HEK293T (cell line): ENCODE measurements at regions of chr5 and their contacts with region 1.

Region 1: GRCh38 chr5:176388444-176389134 is at the starts of genes HIGD2A and NOP16:
- DNase-seq: peak; percentile 98

Region 2: DNA sequence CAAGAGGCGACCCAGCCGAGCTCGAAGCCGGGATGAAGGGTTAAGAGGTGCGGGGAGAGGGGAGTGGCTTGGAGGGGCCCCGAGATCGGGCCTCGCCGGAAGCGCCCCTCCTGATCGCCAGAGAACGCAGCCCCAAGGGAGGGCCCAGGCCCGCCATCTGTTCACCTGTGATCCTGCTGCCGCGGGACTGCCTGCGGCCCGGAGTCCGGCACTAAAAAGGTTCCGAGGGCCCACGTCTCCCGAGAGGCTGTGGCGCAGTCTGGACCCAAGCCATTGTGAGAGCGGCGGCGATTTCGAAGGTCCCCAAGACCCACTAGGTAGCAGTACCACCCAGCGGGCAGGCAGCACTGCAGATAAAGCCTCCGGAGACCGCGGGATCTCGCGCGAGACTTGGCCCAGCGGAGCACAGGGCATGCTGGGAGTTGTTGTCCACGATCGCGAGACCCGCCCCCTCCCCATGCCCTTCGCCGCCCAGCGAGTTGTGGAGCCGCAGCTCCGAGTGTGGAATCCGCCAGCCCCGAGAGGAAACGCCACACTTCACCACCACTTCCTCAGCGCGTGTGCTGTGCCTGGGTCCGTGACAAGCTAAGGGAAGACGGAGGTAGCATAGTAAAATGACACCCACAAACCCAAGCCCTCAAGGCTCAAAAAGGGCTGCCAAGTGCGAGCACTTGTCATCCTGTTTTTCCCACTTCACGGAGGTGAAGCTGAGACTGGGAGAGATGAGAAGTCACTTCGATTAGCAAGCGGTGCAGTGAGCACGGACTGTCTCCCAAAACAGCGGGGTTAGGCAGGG is 27.0 kb before region 1 on chr5 and contains the start of gene KIAA1191:
- CTCF ChIA-PET with region 1: no interaction called
- POLR2A ChIA-PET with region 1: interaction called, 22 read pairs
- DNase-seq: peak; percentile 95

Region 3: DNA sequence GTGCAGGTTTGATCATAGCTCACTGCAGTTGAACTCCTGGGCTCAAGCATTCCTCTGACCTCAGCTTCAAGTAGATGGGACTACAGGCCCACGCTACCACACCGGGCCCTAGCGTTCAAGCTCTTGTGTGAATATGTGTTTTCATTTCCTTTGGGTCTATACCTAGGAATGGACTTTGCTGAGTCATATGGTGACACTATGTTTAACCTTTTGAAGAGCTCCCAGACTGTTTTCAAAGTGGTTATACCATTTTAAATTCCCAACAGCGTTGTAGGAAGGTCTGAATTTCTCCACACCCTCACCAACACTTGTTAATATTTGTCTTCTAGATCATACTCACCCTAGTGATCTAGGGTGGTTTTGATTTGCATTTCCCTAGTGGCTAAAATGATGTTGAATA is 93.1 kb after region 1 on chr5:
- CTCF ChIA-PET with region 1: no interaction called
- POLR2A ChIA-PET with region 1: no interaction called
- DNase-seq: no peak